H1 (cell line): ENCODE measurements at regions of chr19 and their contacts with region 1.

Region 1: GRCh38 chr19:50329146-50329925 is at the start of gene KCNC3:
- DNase-seq: peak; percentile 98 to 99
- H3K4me3 ChIP-seq: peak within 1 kb of the TSS; percentile 74 to 96 (median 84)
- H3K27ac ChIP-seq: 0 out of 2 replicates have a peak within 1 kb of the TSS, but pooled peaks have one; percentile 12
- H3K4me1 ChIP-seq: peaks cover 2 to 33% (median 15%) of the 10 kb centered on the region in 4 experiments
- H3K27me3 ChIP-seq: peaks cover 5 to 15% (median 12%) of the 10 kb centered on the region in 4 experiments; a peak in 6 of 7 replicates
- CTCF ChIP-seq: no peak
- EP300 ChIP-seq: no peak
- POLR2A ChIP-seq: peak; percentile 56 to 74; a peak in 2 of 3 replicates
- RAD21 ChIP-seq: no peak
- total RNA-seq, gene KCNC3: 7.2 and 8.5 TPM in 2 replicates

Region 2: GRCh38 chr19:50315773-50316448 is 13.4 kb before region 1 on chr19:
- CTCF ChIA-PET with region 1: interaction called, 10 read pairs
- POLR2A ChIA-PET with region 1: interaction called, 46 read pairs
- DNase-seq: peak in 1 of 2 experiments; percentile 83
- H3K4me3 ChIP-seq: peak overlapping the region; percentile 36 to 70 (median 44); a peak in 7 of 8 replicates
- H3K27ac ChIP-seq: peak overlapping the region; percentile 56; the same call in 1 of the 2 replicates
- H3K4me1 ChIP-seq: peaks cover 5 to 18% (median 9%) of the 10 kb centered on the region in 4 experiments
- H3K27me3 ChIP-seq: no peaks in the 10 kb centered on the region; a peak in 1 of 7 replicates
- CTCF ChIP-seq: no peak
- EP300 ChIP-seq: no peak
- POLR2A ChIP-seq: no peak
- RAD21 ChIP-seq: no peak; a peak in 1 of 4 replicates

Region 3: GRCh38 chr19:50341091-50341564 is 11.8 kb after region 1 on chr19:
- CTCF ChIA-PET with region 1: interaction called, 3 read pairs
- POLR2A ChIA-PET with region 1: interaction called, 12 read pairs
- DNase-seq: no peak
- H3K4me3 ChIP-seq: no peak overlapping the region
- H3K27ac ChIP-seq: no peak overlapping the region
- H3K4me1 ChIP-seq: no peaks in the 10 kb centered on the region
- H3K27me3 ChIP-seq: no peaks in the 10 kb centered on the region
- CTCF ChIP-seq: no peak
- EP300 ChIP-seq: no peak
- POLR2A ChIP-seq: no peak
- RAD21 ChIP-seq: no peak

Region 4: DNA sequence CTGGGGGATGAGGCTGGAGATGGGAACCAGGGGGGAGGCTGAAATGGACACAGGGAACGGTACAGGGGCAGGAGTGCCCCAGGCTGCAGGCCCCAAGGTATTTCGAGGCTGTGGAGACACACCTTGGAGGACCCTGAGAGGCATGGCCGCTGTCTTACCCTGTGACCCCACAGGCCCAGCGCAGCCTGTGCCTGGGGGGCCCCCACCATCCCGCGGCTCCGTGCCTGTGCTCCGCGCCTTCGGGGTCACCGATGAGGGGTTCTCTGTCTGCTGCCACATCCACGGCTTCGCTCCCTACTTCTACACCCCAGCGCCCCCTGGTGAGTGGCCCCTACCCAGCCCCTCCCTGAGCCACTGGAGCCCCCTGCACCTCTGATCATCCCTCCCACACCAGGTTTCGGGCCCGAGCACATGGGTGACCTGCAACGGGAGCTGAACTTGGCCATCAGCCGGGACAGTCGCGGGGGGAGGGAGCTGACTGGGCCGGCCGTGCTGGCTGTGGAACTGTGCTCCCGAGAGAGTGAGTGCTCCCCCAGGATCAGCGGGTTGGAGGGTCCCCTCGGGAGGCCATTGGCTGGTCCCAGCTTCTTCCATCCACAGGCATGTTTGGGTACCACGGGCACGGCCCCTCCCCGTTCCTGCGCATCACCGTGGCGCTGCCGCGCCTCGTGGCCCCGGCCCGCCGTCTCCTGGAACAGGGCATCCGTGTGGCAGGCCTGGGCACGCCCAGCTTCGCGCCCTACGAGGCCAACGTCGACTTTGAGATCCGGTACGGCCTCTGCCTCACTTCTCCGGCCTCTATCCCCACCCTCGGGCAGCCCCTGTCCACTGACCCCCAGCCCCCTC is 72.5 kb after region 1 on chr19:
- CTCF ChIA-PET with region 1: no interaction called
- POLR2A ChIA-PET with region 1: no interaction called
- DNase-seq: no peak
- H3K4me3 ChIP-seq: no peak overlapping the region
- H3K27ac ChIP-seq: no peak overlapping the region
- H3K4me1 ChIP-seq: no peaks in the 10 kb centered on the region
- H3K27me3 ChIP-seq: no peaks in the 10 kb centered on the region
- CTCF ChIP-seq: peak in 2 of 3 experiments; percentile 6; a peak in 2 of 4 replicates
- EP300 ChIP-seq: no peak
- POLR2A ChIP-seq: no peak
- RAD21 ChIP-seq: no peak; a peak in 1 of 4 replicates